Transverse colon (tissue), 4 donors: ENCODE measurements at regions of chr20 and their contacts with region 1.

Region 1: GRCh38 chr20:17109307-17109706 is 117.5 kb upstream of the PCSK2 start:
- DNase-seq: no peak
- H3K4me3 ChIP-seq: no peak overlapping the region
- H3K27ac ChIP-seq: no peak overlapping the region
- H3K4me1 ChIP-seq: no peaks in the 10 kb centered on the region
- H3K27me3 ChIP-seq: no peaks in the 10 kb centered on the region
- CTCF ChIP-seq: no peak
- EP300 ChIP-seq: no peak
- POLR2A ChIP-seq: no peak

Region 2: GRCh38 chr20:16209951-16210361 is 899.4 kb before region 1 on chr20:
- in situ Hi-C with region 1: no loop called
- intact Hi-C with region 1: no loop called
- DNase-seq: no peak
- H3K4me3 ChIP-seq: no peak overlapping the region
- H3K27ac ChIP-seq: no peak overlapping the region
- H3K4me1 ChIP-seq: no peaks in the 10 kb centered on the region
- H3K27me3 ChIP-seq: no peaks in the 10 kb centered on the region
- CTCF ChIP-seq: no peak
- EP300 ChIP-seq: no peak
- POLR2A ChIP-seq: no peak

Region 3: GRCh38 chr20:17066902-17067301 is 42.4 kb before region 1 on chr20:
- in situ Hi-C with region 1: no loop called
- intact Hi-C with region 1: loop called (anchors 1 kb)
- DNase-seq: no peak
- H3K4me3 ChIP-seq: no peak overlapping the region
- H3K27ac ChIP-seq: no peak overlapping the region
- H3K4me1 ChIP-seq: no peaks in the 10 kb centered on the region
- H3K27me3 ChIP-seq: no peaks in the 10 kb centered on the region
- CTCF ChIP-seq: no peak
- EP300 ChIP-seq: no peak
- POLR2A ChIP-seq: no peak